Activated CD4-positive, alpha-beta T cell treated with anti-CD3 and anti-CD28 coated beads for 36 hours (primary cell): ENCODE measurements at regions of chr1 and their contacts with region 1.

Region 1: DNA sequence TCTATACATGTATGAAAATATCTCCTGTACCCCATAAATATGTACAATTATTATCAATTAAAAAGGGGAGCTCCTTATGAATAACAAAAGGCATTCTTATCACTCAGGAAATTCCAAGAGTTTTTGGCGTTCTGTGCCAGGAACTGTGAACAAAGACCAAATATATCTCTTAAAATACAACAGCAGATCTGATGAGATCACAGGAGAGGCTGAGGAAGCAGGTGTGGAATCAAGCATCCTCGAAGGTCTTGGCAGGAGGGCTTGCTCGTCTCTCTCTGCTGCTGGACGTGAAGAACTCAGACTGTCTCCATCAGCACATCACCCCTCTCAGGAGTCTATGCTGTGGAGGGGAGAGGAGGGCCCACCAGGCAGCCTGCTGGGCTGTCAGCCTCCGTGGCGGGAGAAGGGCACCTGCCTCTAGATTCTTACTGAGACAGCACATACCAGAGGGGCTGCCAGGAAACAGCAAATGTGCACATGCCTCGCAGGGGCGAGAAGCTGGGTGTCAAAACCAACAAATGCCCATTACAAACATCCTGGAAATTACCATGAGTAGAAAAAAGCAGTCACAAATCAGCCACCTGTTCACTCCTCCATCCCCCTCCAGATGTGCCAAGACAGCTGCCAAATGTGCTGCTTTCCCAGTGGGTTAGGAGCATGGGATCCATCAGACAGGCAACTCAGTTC is 30.8 kb upstream of the FAM89A start:
- DNase-seq: no peak
- ATAC-seq: no peak
- H3K4me3 Mint-ChIP-seq: no peak overlapping the region
- H3K27ac Mint-ChIP-seq: no peak overlapping the region
- H3K4me1 Mint-ChIP-seq: no peaks in the 10 kb centered on the region
- H3K27me3 Mint-ChIP-seq: no peaks in the 10 kb centered on the region

Region 2: DNA sequence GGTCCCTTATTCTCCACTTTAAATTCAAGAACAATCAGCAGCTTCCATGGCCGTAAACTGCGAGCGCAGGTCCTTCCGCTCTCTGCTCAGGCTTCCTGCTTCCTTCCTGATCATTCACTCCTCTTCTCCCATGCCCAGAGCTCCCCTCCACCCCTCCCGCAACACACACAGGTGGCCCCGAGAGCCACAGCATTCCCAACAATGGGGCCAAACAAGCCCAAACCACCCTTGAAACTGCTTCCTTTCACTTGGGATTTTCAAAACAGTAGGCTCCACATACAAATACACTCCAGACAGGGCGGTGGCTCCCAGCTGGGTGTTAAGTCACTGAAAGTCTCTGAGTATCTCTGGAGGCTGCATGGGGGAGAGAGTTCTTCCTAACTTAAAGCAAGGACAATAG is 42.2 kb before region 1 on chr1:
- CTCF ChIA-PET with region 1: no interaction called
- POLR2A ChIA-PET with region 1: no interaction called
- intact Hi-C with region 1: no loop called
- DNase-seq: no peak
- ATAC-seq: no peak
- H3K4me3 Mint-ChIP-seq: no peak overlapping the region
- H3K27ac Mint-ChIP-seq: no peak overlapping the region
- H3K4me1 Mint-ChIP-seq: peaks cover 6% of the 10 kb centered on the region
- H3K27me3 Mint-ChIP-seq: no peaks in the 10 kb centered on the region

Region 3: DNA sequence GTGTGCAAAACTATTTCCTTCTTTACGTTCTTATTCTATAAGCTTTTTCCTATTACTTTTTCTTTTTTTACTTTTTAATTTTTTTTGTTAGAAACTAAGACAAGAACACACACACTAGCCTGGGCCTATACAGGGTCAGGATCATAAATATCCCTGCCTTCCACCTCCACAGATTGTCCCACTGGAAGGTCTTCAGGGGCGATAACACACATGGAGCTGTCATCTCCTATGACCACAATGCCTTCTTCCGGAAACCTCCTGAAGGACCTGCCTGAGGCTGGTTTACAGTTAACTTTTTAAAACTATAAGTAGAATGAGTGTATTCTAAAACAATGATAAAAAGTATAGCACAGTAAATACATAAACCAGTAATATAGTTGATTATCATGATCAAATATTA is 20.5 kb before region 1 on chr1:
- CTCF ChIA-PET with region 1: no interaction called
- POLR2A ChIA-PET with region 1: no interaction called
- intact Hi-C with region 1: loop called in 1 of 2 experiments (anchors 2 kb)
- DNase-seq: no peak
- ATAC-seq: no peak
- H3K4me3 Mint-ChIP-seq: no peak overlapping the region
- H3K27ac Mint-ChIP-seq: no peak overlapping the region
- H3K4me1 Mint-ChIP-seq: peaks cover 12% of the 10 kb centered on the region
- H3K27me3 Mint-ChIP-seq: peaks cover 10% of the 10 kb centered on the region